Naive thymus-derived CD8-positive, alpha-beta T cell (primary cell): ENCODE measurements at regions of chr6 and their contacts with region 1.

Region 1: DNA sequence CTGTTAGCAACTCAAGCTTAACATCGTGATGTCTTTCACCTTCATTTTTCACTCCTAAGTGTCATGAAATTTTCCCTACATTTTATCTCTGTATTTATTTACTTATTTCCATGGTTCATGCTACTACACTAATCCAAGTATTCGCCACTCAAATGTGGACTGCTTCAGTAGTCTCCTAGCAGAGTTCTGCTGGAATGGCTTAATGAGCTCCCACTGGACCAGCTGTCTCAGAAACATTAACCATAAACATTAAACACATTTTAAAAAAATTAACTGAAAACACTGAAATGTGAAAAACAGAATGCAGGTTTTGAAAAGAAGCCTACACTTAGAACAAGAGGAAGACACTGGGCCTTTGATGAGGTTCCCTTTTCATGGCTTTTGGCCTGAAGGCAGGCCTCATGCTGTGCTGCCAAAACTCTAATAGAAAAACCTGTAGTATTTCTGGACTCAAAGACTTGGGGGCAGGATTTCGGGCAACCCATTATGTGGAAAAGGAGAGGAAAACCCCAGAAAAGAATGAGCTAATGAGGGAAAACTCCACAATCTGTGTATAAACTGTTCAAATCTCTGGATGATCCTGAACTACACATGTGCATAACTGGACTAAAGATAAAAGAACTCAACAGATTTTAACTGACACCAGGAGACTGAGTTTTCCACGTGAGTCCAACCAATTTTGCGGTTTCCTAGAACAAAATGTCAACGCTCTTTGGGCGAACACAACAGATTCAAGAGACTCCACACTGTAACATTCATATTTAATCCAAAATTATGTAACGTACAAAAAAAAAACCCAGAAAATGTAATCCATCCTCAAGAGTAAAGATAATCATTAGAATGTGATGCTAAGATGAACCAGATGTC is 33.0 kb downstream of the SAMD3 start:
- DNase-seq: peak in 2 of 10 donors; percentile 32 to 35
- ATAC-seq: peak; percentile 59 to 73
- H3K4me3 Mint-ChIP-seq: peak overlapping the region in 9 of 10 donors; percentile 16 to 79 (median 59)
- H3K27ac Mint-ChIP-seq: peak overlapping the region; percentile 85 to 96 (median 92)
- H3K4me1 Mint-ChIP-seq: peaks cover 48 to 87% (median 83%) of the 10 kb centered on the region in 4 donors
- H3K27me3 Mint-ChIP-seq: no peaks in the 10 kb centered on the region

Region 2: DNA sequence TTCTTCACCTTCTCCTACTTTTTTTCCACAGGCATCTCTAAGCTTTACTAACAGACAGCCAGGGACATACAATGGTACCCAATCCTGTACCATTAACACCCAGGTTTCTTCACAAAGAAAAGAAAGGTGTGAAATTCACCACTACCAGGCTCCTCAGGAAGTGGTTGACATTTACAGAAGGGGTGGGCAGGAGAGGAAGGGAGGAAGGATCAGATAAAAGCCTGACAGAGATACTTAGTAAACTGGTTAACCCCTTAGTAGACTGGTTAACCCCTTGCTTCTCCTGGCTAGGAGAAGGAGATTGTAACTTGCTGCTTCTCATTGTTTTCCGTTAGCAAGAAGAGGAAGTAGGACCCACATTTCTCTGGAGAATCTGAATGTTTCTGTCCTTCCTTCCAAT is 25.8 kb after region 1 on chr6:
- POLR2A ChIA-PET with region 1: interaction called, 13 read pairs
- DNase-seq: peak in 8 of 10 donors; percentile 6 to 77 (median 63)
- ATAC-seq: peak; percentile 97 to 98
- H3K4me3 Mint-ChIP-seq: peak overlapping the region; percentile 82 to 94 (median 88)
- H3K27ac Mint-ChIP-seq: peak overlapping the region; percentile 60 to 96 (median 90)
- H3K4me1 Mint-ChIP-seq: peaks cover 16 to 77% (median 39%) of the 10 kb centered on the region in 4 donors
- H3K27me3 Mint-ChIP-seq: no peaks in the 10 kb centered on the region

Region 3: GRCh38 chr6:130437961-130438360 is 248.2 kb after region 1 on chr6:
- POLR2A ChIA-PET with region 1: no interaction called
- DNase-seq: no peak
- ATAC-seq: no peak
- H3K4me3 Mint-ChIP-seq: no peak overlapping the region
- H3K27ac Mint-ChIP-seq: no peak overlapping the region
- H3K4me1 Mint-ChIP-seq: peaks cover 0 to 5% (median under 1%) of the 10 kb centered on the region in 4 donors
- H3K27me3 Mint-ChIP-seq: peaks cover 0 to 7% (median 0%) of the 10 kb centered on the region in 5 donors